AG04449 (cell line): ENCODE measurements at regions of chr19 and their contacts with region 1.

Region 1: DNA sequence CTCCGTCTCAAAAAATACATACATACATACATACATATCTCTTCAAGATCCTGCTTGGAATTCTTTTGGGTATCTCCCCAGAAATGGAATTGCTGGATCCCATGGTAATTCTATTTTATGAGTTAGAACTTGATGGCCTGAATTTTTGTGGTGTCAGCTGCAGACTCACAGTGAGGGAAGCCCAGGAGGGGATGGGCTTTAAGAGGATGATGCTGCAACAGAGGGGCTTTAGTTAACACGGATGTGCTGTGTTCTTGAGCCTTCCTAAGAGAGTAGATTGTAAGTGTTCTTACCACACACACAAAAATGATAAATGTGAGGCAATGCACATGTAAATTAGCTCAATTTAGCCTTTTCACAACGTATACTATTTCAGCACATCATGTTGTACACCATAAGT is 31.8 kb downstream of the CACNG6 start:
- DNase-seq: no peak
- H3K4me3 ChIP-seq: no peak overlapping the region
- CTCF ChIP-seq: no peak

Region 2: DNA sequence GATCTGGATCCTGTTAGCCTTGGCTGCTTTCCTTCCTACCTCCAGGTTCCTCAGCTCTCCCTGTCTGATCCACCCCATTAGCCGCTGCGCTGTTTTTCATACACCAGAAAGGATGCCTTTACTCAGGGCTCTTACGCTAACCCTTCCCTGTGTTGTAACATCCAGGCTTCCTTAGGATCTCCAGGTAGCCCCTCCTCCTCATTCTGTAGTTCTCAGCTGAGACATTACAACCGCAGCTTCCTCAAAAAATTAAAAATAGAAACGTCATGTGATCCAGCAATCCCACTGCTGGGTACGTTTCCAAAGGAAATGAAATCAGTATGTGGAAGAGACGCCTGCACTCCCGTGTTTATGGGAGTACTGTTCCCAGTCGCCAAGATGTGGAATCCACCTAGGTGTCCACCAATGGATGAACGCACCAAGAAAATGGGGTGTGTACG is 173.9 kb before region 1 on chr19:
- CTCF ChIA-PET with region 1: interaction called, 14 read pairs
- POLR2A ChIA-PET with region 1: no interaction called
- DNase-seq: no peak
- H3K4me3 ChIP-seq: peak overlapping the region; percentile 21; the same call in 1 of the 2 replicates
- CTCF ChIP-seq: no peak

Region 3: DNA sequence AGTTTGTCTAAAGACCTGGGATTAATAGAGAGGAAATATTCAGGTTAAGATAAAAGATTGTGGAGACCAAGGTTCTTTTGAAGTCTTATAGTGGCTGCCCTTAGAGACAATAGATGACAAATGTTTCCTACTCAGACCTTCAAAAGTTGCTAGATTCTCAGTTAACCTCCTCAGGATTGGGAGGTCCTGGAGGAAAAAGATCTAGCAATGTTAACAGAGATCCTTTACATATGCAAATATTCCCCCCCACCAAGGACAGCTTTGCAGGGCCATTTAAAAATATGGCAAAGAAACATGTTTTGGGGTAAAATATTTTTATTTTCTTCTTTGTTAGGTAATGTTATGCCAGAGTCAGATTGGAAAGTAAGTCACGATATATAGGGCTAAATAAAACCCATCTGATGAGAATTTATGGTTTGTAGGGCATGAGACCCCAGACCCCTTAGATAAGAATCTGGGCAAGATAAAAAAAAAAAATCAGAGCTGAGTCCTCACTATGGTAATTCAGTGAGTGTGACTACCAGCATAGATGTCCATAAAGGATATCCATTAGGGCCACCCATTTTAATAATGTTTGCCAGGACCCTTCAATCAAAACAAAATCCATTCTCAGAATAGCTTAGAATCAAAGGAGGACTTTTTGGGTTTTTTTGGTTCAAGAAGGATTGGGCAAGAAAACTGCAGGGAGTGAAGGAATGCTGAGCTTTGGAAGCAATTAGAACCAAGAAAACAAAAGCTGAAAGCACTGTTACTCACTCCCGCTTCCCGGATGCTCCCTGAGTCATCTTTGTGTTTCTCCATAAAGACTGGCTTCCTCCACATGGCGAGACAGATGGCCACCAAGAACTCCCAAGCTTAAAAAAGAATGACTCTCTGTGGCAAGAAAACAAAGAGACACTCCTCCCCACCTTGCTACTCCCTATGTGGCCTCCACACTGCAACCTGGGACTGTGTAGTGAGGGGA is 12.3 kb after region 1 on chr19:
- CTCF ChIA-PET with region 1: interaction called, 33 read pairs
- POLR2A ChIA-PET with region 1: no interaction called
- DNase-seq: peak; percentile 29
- H3K4me3 ChIP-seq: no peak overlapping the region
- CTCF ChIP-seq: no peak

Region 4: GRCh38 chr19:54172471-54173358 is 149.5 kb after region 1 on chr19 and contains the start of gene TMC4:
- CTCF ChIA-PET with region 1: no interaction called
- POLR2A ChIA-PET with region 1: no interaction called
- DNase-seq: no peak
- H3K4me3 ChIP-seq: no peak within 1 kb of the TSS
- CTCF ChIP-seq: no peak